ENCODE measurements at regions of chr20 and their contacts with region 1.

Region 1: GRCh38 chr20:56400090-56400542 is 7.7 kb downstream of the CSTF1 start:
- DNase-seq: peak; percentile 70
- H3K4me3 Mint-ChIP-seq: no peak overlapping the region
- H3K27ac Mint-ChIP-seq: no peak overlapping the region
- H3K4me1 Mint-ChIP-seq: no peaks in the 10 kb centered on the region
- H3K27me3 Mint-ChIP-seq: no peaks in the 10 kb centered on the region
- CTCF ChIP-seq: peak; percentile 60

Region 2: GRCh38 chr20:56299356-56299755 is 100.8 kb before region 1 on chr20:
- CTCF ChIA-PET with region 1: no interaction called
- POLR2A ChIA-PET with region 1: no interaction called
- intact Hi-C with region 1: no loop called
- DNase-seq: no peak
- H3K4me3 Mint-ChIP-seq: no peak overlapping the region
- H3K27ac Mint-ChIP-seq: no peak overlapping the region
- H3K4me1 Mint-ChIP-seq: no peaks in the 10 kb centered on the region
- H3K27me3 Mint-ChIP-seq: peaks cover 38% of the 10 kb centered on the region
- CTCF ChIP-seq: no peak

Region 3: DNA sequence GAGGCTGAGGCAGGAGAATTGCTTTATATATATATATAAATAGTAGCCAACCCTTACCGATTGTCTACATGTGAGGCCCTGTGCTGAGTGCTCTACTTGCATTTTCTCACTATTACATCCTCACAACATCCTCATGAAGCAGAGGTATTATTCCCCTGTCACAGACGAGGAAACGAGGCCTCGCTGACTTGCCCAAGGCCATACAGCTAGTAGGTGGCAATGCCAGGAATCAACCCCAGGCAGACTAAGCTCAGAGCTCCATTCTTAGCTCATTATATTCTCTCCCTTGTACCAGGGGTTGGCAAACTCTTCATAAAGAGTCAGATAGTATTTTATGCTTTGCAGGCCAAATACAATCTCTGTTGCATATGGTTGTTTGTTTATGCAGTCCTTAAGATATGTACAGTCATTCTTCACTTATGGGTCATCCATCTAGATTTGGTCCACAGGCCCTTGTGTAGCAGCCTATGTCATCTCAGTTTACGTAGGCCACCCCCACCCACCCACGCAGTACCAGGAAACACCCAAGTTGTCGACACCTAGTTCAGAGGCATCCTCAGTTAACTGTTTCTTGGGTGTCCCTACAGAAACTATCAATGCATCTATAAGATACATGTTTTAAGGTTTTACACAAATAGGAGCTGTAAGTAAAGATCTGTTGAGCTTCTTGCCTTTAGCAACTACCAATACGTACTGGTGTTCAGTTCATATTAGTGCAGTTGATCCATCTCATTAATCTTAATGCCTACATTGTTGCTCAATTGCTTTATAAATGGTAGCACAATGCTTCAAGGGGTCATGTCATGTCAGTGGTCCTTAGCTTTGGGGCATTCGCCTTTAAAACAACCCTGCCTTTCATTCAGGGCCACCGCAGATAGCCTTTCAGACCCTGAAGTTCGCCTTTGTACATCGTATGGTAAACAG is 15.0 kb after region 1 on chr20:
- CTCF ChIA-PET with region 1: interaction called, 14 read pairs
- POLR2A ChIA-PET with region 1: interaction called, 3 read pairs
- intact Hi-C with region 1: no loop called
- DNase-seq: no peak
- H3K4me3 Mint-ChIP-seq: no peak overlapping the region
- H3K27ac Mint-ChIP-seq: no peak overlapping the region
- H3K4me1 Mint-ChIP-seq: no peaks in the 10 kb centered on the region
- H3K27me3 Mint-ChIP-seq: no peaks in the 10 kb centered on the region
- CTCF ChIP-seq: no peak

Region 4: GRCh38 chr20:56468316-56469082 is 68.4 kb after region 1 on chr20 and contains the start of gene RTF2:
- CTCF ChIA-PET with region 1: interaction called, 3 read pairs
- POLR2A ChIA-PET with region 1: interaction called, 3 read pairs
- intact Hi-C with region 1: loop called (anchors 5 kb)
- DNase-seq: peak; percentile 91
- H3K4me3 Mint-ChIP-seq: peak within 1 kb of the TSS; percentile 99
- H3K27ac Mint-ChIP-seq: peak within 1 kb of the TSS; percentile 100
- H3K4me1 Mint-ChIP-seq: peaks cover 10% of the 10 kb centered on the region
- H3K27me3 Mint-ChIP-seq: peaks cover 11% of the 10 kb centered on the region
- CTCF ChIP-seq: no peak
- total RNA-seq, gene RTF2: 66.4 and 72.8 TPM in 2 replicates

Region 5: DNA sequence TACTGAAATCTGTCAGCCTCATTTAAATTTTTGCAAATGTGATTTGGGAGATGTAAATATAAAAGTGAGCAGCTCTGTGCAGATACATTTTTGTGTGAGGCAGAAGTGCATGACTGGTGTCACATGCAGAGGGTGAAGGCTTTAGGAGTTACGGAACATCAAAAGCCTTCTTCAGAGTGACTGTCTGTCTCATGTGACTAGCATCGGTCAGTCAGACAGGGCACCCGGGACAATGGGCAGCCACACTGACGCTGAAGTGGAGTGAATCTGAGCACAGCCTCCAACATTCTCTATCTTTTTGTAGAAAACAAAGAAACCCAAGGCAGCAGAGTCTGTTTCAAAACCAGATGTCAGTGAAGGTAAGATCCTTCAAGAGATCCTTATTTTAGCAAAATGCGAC is 116.5 kb after region 1 on chr20:
- CTCF ChIA-PET with region 1: interaction called, 4 read pairs
- POLR2A ChIA-PET with region 1: no interaction called
- intact Hi-C with region 1: loop called (anchors 1 kb)
- DNase-seq: no peak
- H3K4me3 Mint-ChIP-seq: no peak overlapping the region
- H3K27ac Mint-ChIP-seq: no peak overlapping the region
- H3K4me1 Mint-ChIP-seq: no peaks in the 10 kb centered on the region
- H3K27me3 Mint-ChIP-seq: no peaks in the 10 kb centered on the region
- CTCF ChIP-seq: no peak

Region 6: GRCh38 chr20:56574531-56575142 is 174.5 kb after region 1 on chr20:
- CTCF ChIA-PET with region 1: interaction called, 11 read pairs
- POLR2A ChIA-PET with region 1: no interaction called
- intact Hi-C with region 1: loop called (anchors 1 kb)
- DNase-seq: peak; percentile 92
- H3K4me3 Mint-ChIP-seq: no peak overlapping the region
- H3K27ac Mint-ChIP-seq: peak overlapping the region; percentile 71
- H3K4me1 Mint-ChIP-seq: peaks cover 18% of the 10 kb centered on the region
- H3K27me3 Mint-ChIP-seq: no peaks in the 10 kb centered on the region
- CTCF ChIP-seq: no peak

Region 7: DNA sequence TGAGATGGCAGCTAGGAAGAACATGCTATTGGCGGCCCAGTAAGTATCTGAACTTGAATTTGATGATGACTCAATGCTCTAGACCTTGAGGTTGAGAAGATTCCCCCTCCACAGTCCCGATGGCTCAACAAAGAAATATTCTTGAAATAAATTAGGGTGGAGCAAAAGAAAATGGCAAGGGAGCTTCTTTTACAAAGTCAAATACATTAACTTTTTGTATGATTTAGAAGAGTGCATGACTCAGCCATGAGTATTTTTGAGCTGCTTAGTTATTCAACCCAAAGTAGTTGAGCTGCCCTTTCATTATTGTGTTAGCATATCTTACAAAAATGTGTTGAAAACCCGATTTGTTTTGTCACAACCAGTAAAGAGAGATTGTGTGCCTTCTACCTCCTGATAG is 236.6 kb after region 1 on chr20:
- CTCF ChIA-PET with region 1: no interaction called
- POLR2A ChIA-PET with region 1: no interaction called
- intact Hi-C with region 1: no loop called
- DNase-seq: peak; percentile 25
- H3K4me3 Mint-ChIP-seq: no peak overlapping the region
- H3K27ac Mint-ChIP-seq: no peak overlapping the region
- H3K4me1 Mint-ChIP-seq: peaks cover 37% of the 10 kb centered on the region
- H3K27me3 Mint-ChIP-seq: no peaks in the 10 kb centered on the region
- CTCF ChIP-seq: no peak